OCI-LY7 (cell line): ENCODE measurements at regions of chr1 and their contacts with region 1.

Region 1: GRCh38 chr1:160726498-160727315 is 12.3 kb upstream of the SLAMF7 start:
- DNase-seq: peak; percentile 86
- H3K4me3 ChIP-seq: peak overlapping the region; percentile 12
- H3K27ac ChIP-seq: no peak overlapping the region
- H3K4me1 ChIP-seq: peaks cover 17% of the 10 kb centered on the region
- CTCF ChIP-seq: peak; percentile 99

Region 2: GRCh38 chr1:160768295-160768657 is 41.6 kb after region 1 on chr1:
- CTCF ChIA-PET with region 1: no interaction called
- POLR2A ChIA-PET with region 1: no interaction called
- intact Hi-C with region 1: loop called (anchors 1 kb)
- DNase-seq: peak; percentile 84
- H3K4me3 ChIP-seq: peak overlapping the region; percentile 62
- H3K27ac ChIP-seq: no peak overlapping the region
- H3K4me1 ChIP-seq: peaks cover 7% of the 10 kb centered on the region
- CTCF ChIP-seq: peak; percentile 90

Region 3: GRCh38 chr1:160830321-160831153 is 103.8 kb after region 1 on chr1:
- CTCF ChIA-PET with region 1: no interaction called
- POLR2A ChIA-PET with region 1: no interaction called
- intact Hi-C with region 1: loop called (anchors 1 kb)
- DNase-seq: peak; percentile 80
- H3K4me3 ChIP-seq: no peak overlapping the region
- H3K27ac ChIP-seq: no peak overlapping the region
- H3K4me1 ChIP-seq: no peaks in the 10 kb centered on the region
- CTCF ChIP-seq: peak; percentile 92

Region 4: DNA sequence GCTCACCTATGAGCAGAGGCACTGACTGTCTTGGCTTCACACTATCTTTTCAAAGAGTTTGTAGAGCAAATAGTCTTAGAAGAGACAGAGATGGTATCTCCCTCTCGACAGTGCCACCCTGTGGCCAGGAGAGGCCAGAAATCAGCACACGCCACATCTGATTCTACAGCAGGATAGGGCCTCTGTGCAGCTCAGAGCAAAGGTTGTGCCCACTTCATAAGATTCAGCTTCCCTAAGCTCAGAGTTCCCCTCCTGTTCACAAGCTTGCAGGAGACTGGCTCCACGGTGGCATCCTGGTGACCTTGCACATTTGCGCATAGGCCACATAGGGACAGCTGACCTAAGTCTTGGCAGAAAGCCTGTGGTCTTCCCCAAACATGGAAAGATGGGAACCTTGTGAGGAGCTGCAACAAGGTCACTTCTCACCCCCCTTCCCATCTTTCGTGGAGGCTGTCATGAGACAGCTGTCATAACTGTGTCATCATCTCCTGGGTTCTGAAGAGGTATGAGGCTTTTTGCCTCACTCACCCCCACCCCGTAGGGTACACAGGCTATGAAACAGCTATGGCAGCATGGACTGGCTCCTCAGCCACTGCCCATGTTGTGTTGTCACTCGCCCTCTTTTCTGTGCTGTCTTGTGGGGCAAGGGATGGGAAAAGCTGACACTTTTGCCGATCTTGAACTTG is 224.9 kb after region 1 on chr1:
- CTCF ChIA-PET with region 1: interaction called, 3 read pairs
- POLR2A ChIA-PET with region 1: no interaction called
- intact Hi-C with region 1: loop called (anchors 1 kb)
- DNase-seq: peak; percentile 80
- H3K4me3 ChIP-seq: no peak overlapping the region
- H3K27ac ChIP-seq: no peak overlapping the region
- H3K4me1 ChIP-seq: no peaks in the 10 kb centered on the region
- CTCF ChIP-seq: peak; percentile 93